Naive thymus-derived CD4-positive, alpha-beta T cell (primary cell): ENCODE measurements at regions of chr15 and their contacts with region 1.

Region 1: GRCh38 chr15:90818251-90819210 is 49.9 kb upstream of the FURIN start:
- DNase-seq: peak in 2 of 9 donors; percentile 13 to 21
- ATAC-seq: peak; percentile 68
- H3K4me3 ChIP-seq: no peak overlapping the region
- H3K4me3 Mint-ChIP-seq: peak overlapping the region in 3 of 10 donors; percentile 29 to 79 (median 50)
- H3K27ac ChIP-seq: no peak overlapping the region
- H3K27ac Mint-ChIP-seq: peak overlapping the region in 5 of 9 donors; percentile 31 to 94 (median 55)
- H3K4me1 ChIP-seq: peaks cover 0 to 12% of the 10 kb centered on the region in 2 donors
- H3K4me1 Mint-ChIP-seq: peaks cover 0 to 76% (median 10%) of the 10 kb centered on the region in 7 donors
- H3K27me3 ChIP-seq: no peaks in the 10 kb centered on the region
- H3K27me3 Mint-ChIP-seq: no peaks in the 10 kb centered on the region

Region 2: DNA sequence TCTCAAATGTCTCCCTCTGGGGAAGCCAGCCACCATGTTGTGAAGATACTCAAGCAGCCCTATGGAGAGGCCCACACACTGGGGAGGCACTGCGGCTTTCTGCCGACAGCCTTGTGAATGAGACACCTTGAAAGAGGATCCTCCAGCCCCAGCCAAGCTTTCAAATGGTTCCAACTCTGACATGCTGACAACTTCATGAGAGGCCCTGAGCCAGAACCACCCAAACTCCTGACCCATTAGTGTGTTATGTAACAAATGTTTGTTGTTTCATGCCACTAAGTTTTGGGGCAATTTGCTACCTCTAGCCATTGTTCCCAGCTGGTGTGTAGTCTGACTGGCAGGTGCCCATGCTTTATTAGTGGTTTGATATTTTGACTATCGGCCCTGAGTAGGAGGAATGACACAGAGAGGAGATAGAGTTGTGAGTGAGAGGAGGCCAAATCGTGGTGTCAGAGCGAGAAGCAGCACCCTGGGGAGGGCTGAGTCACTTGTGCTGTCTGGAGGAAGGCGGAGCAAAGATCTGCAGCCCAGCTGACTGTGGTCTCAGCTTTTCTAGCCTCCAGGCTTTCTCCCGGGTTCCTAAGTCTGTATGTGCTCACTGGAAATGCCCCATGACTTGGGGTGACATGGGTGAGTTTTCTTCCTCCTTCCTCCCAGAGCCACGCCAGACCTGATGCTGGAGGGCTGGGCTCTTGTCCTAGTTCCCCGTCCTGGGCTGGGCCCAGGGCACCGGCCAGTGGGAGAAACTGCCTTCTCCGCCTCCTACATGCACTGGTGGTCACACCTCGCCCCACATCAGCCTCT is 158.1 kb before region 1 on chr15:
- CTCF ChIA-PET with region 1: no interaction called
- POLR2A ChIA-PET with region 1: no interaction called
- intact Hi-C with region 1: loop called in 1 of 2 experiments (anchors 5 kb)
- DNase-seq: peak in 6 of 9 donors; percentile 25 to 68 (median 38)
- ATAC-seq: peak; percentile 83
- H3K4me3 ChIP-seq: peak overlapping the region; percentile 45
- H3K4me3 Mint-ChIP-seq: peak overlapping the region; percentile 68 to 93 (median 83)
- H3K27ac ChIP-seq: no peak overlapping the region
- H3K27ac Mint-ChIP-seq: peak overlapping the region in 4 of 9 donors; percentile 32 to 79 (median 74)
- H3K4me1 ChIP-seq: peaks cover 40 to 50% of the 10 kb centered on the region in 2 donors
- H3K4me1 Mint-ChIP-seq: peaks cover 61 to 93% (median 80%) of the 10 kb centered on the region in 7 donors
- H3K27me3 ChIP-seq: no peaks in the 10 kb centered on the region
- H3K27me3 Mint-ChIP-seq: peaks cover 0 to 32% (median 14%) of the 10 kb centered on the region in 5 donors

Region 3: GRCh38 chr15:90807074-90807785 is 11.3 kb before region 1 on chr15:
- CTCF ChIA-PET with region 1: no interaction called
- POLR2A ChIA-PET with region 1: no interaction called
- intact Hi-C with region 1: loop called in 1 of 2 experiments (anchors 1 kb)
- DNase-seq: no peak
- ATAC-seq: no peak
- H3K4me3 ChIP-seq: no peak overlapping the region
- H3K4me3 Mint-ChIP-seq: peak overlapping the region in 1 of 10 donors; percentile 52
- H3K27ac ChIP-seq: no peak overlapping the region
- H3K27ac Mint-ChIP-seq: peak overlapping the region in 1 of 9 donors; percentile 95
- H3K4me1 ChIP-seq: no peaks in the 10 kb centered on the region
- H3K4me1 Mint-ChIP-seq: peaks cover 0 to 66% (median 0%) of the 10 kb centered on the region in 7 donors
- H3K27me3 ChIP-seq: no peaks in the 10 kb centered on the region
- H3K27me3 Mint-ChIP-seq: no peaks in the 10 kb centered on the region

Region 4: GRCh38 chr15:90829942-90830440 is 11.5 kb after region 1 on chr15:
- CTCF ChIA-PET with region 1: no interaction called
- POLR2A ChIA-PET with region 1: no interaction called
- intact Hi-C with region 1: loop called in 1 of 2 experiments (anchors 1 kb)
- DNase-seq: peak in 4 of 9 donors; percentile 24 to 74 (median 44)
- ATAC-seq: peak; percentile 80
- H3K4me3 ChIP-seq: no peak overlapping the region
- H3K4me3 Mint-ChIP-seq: peak overlapping the region; percentile 26 to 83 (median 60)
- H3K27ac ChIP-seq: no peak overlapping the region
- H3K27ac Mint-ChIP-seq: peak overlapping the region; percentile 0 to 98 (median 79)
- H3K4me1 ChIP-seq: peaks cover 0 to 5% of the 10 kb centered on the region in 2 donors
- H3K4me1 Mint-ChIP-seq: peaks cover 12 to 70% (median 19%) of the 10 kb centered on the region in 7 donors
- H3K27me3 ChIP-seq: no peaks in the 10 kb centered on the region
- H3K27me3 Mint-ChIP-seq: no peaks in the 10 kb centered on the region

Region 5: GRCh38 chr15:90851940-90852339 is 33.4 kb after region 1 on chr15:
- CTCF ChIA-PET with region 1: no interaction called
- POLR2A ChIA-PET with region 1: no interaction called
- intact Hi-C with region 1: loop called in 1 of 2 experiments (anchors 1 kb)
- DNase-seq: no peak
- ATAC-seq: no peak
- H3K4me3 ChIP-seq: no peak overlapping the region
- H3K4me3 Mint-ChIP-seq: peak overlapping the region in 7 of 10 donors; percentile 18 to 87 (median 52)
- H3K27ac ChIP-seq: no peak overlapping the region
- H3K27ac Mint-ChIP-seq: peak overlapping the region in 5 of 9 donors; percentile 27 to 92 (median 54)
- H3K4me1 ChIP-seq: peaks cover 19 to 21% of the 10 kb centered on the region in 2 donors
- H3K4me1 Mint-ChIP-seq: peaks cover 24 to 78% (median 38%) of the 10 kb centered on the region in 7 donors
- H3K27me3 ChIP-seq: no peaks in the 10 kb centered on the region
- H3K27me3 Mint-ChIP-seq: peaks cover 0 to 6% (median 0%) of the 10 kb centered on the region in 5 donors

Region 6: DNA sequence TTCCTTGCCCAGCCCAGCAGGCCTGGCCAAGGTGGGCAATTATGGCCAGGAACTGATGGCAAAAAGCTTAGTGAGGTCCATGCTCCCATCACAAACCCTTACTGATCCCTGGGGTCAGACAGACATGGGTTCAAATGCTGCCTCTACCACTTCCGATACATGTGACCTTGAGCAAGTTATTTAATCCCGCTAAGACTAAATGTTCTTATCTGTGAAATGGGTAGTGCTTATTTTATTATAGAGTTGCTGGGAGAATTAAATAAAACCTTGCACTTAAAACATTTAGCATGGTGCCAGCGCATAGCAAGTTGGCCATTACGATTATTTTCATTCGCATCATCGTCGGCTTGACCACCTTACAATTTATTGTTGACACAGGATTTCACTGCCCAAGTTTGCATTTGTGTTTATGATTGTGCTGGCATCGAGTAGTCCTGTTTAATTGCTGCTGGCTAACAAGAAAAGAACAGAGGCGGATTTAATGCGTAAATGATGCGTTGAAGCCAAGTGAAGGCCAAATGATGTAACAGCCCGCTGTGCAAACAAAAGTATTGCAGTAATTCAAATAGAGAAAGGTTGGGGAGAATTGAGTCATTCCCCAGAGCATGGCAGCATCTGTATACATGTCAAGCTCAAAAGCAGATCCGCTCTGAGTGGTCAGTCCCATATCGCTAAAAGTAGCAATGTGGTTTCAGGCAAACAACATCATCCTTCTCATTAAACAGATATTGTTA is 42.6 kb after region 1 on chr15:
- CTCF ChIA-PET with region 1: no interaction called
- POLR2A ChIA-PET with region 1: no interaction called
- intact Hi-C with region 1: loop called in 1 of 2 experiments (anchors 2 kb)
- DNase-seq: no peak
- ATAC-seq: no peak
- H3K4me3 ChIP-seq: no peak overlapping the region
- H3K4me3 Mint-ChIP-seq: no peak overlapping the region
- H3K27ac ChIP-seq: no peak overlapping the region
- H3K27ac Mint-ChIP-seq: peak overlapping the region in 1 of 9 donors; percentile 53
- H3K4me1 ChIP-seq: peaks cover 8 to 9% of the 10 kb centered on the region in 2 donors
- H3K4me1 Mint-ChIP-seq: peaks cover 0 to 65% (median 15%) of the 10 kb centered on the region in 7 donors
- H3K27me3 ChIP-seq: no peaks in the 10 kb centered on the region
- H3K27me3 Mint-ChIP-seq: no peaks in the 10 kb centered on the region

Region 7: DNA sequence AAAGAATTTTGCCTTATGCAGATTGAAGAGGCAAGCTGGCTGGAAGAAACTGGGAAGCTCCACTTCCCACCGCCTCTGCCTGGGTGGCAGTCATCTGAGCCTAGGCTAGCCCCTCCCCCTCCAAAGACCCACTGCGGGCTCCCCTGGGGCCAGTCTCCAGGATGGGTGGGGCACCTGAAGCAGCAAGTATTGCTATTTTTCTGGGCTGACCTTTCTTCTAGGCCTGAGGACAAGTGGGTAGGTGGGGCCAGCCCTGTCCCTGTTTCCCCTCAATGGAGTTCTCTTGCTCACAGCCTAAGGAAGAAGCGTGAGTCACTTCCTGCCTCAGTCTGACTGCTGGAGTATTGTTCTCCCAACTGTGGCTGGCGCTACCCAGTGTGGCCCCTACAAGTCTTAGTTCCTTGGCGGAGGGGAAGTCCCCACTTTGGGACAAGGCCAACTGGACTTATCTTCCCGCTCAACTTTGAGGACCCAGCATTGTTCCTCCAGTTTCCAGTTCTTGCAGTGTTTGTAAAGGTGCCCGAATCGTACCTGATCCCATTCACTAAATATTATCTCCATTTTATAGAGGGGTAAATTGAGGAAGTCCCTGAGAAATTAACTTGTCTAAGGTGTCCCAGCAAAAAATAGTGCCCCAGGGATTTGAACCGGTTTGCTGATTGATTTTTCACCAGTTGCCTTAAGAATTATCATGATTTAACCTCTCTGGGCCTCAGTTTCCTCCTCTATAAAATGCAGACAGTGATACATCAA is 51.2 kb after region 1 on chr15:
- CTCF ChIA-PET with region 1: no interaction called
- POLR2A ChIA-PET with region 1: no interaction called
- intact Hi-C with region 1: loop called in 1 of 2 experiments (anchors 1 kb)
- DNase-seq: peak in 1 of 9 donors; percentile 67
- ATAC-seq: peak; percentile 73
- H3K4me3 ChIP-seq: peak overlapping the region; percentile 53
- H3K4me3 Mint-ChIP-seq: peak overlapping the region; percentile 82 to 93 (median 90)
- H3K27ac ChIP-seq: peak overlapping the region; percentile 73
- H3K27ac Mint-ChIP-seq: peak overlapping the region; percentile 82 to 97 (median 92)
- H3K4me1 ChIP-seq: peaks cover 27% of the 10 kb centered on the region in 2 donors
- H3K4me1 Mint-ChIP-seq: peaks cover 22 to 66% (median 45%) of the 10 kb centered on the region in 7 donors
- H3K27me3 ChIP-seq: no peaks in the 10 kb centered on the region
- H3K27me3 Mint-ChIP-seq: no peaks in the 10 kb centered on the region